AG04449 (cell line): ENCODE measurements at regions of chr15 and their contacts with region 1.

Region 1: DNA sequence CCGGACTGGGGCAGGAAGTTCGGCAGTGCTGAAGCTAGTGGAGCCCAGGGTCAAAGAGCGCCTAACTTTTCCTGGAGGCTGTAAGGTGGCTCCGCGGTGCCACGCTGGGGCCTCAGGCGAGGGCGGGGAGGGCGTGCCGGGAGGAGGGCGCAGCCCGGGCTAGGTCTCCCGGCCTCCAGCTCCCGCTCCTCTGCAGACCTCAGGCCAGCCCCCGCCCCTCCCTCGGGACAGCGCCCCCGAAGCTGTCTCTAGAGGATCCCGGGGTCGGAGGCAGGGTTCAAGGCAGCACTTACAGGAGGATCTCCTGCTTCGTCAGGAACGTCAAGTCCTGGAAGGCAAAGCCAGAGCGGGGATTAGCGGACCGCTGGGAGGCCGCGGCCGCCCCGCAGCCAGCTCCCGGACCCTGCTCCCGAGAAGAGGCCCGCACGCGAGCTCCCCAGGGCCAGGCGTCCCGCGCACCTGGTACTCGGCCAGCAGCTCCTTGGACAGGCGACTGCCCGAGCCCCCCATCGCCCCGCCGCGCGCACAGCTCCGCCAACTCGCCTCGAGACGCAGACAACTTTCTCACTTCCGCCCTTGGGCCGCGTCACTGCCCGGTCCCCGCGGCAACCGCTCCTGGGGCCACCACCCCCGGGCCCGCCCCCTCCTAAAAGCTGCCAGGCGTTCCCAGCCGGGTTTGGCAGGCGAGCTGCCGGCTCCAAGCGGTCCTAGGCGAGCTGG is at the start of gene CIB1:
- DNase-seq: peak; percentile 57
- H3K4me3 ChIP-seq: peak within 1 kb of the TSS; percentile 83
- CTCF ChIP-seq: peak; percentile 39

Region 2: DNA sequence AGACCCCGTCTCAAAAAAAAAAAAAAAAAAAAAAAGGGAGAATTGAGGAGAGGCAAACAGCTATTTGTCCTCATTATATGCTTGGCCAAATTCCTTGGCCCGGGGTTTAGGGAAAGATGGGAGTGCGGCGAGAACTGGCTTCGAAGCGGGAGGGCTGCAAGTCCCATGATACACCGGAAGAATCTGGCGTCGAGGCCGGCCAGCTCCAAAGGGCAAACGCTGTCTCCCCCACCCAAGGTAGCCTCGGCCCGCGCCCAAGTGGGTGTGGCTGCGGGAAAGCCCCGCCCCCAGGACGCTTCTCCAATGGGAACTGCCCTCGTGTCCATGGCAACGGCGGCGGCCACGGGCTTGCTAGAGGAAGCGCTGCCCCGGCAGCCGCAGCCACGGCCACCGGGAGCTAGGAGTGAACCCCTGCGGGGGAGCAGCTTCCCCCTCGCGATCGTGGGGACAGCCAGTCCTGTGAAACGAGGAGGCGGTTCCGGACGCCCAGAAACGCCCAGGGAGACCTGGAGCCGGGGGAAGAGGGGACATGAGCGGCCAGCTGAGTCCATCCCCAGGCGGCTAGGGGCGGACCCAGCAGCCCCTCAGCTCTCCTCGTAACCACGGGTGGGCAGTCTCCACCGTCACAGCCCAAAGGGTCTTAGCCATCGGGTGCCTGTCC is 15.8 kb after region 1 on chr15 and contains the start of gene TTLL13:
- CTCF ChIA-PET with region 1: interaction called, 13 read pairs
- POLR2A ChIA-PET with region 1: interaction called, 4 read pairs
- DNase-seq: peak; percentile 12
- H3K4me3 ChIP-seq: peak within 1 kb of the TSS; percentile 70
- CTCF ChIP-seq: no peak